AG04449 (cell line): ENCODE measurements at regions of chr22 and their contacts with region 1.

Region 1: DNA sequence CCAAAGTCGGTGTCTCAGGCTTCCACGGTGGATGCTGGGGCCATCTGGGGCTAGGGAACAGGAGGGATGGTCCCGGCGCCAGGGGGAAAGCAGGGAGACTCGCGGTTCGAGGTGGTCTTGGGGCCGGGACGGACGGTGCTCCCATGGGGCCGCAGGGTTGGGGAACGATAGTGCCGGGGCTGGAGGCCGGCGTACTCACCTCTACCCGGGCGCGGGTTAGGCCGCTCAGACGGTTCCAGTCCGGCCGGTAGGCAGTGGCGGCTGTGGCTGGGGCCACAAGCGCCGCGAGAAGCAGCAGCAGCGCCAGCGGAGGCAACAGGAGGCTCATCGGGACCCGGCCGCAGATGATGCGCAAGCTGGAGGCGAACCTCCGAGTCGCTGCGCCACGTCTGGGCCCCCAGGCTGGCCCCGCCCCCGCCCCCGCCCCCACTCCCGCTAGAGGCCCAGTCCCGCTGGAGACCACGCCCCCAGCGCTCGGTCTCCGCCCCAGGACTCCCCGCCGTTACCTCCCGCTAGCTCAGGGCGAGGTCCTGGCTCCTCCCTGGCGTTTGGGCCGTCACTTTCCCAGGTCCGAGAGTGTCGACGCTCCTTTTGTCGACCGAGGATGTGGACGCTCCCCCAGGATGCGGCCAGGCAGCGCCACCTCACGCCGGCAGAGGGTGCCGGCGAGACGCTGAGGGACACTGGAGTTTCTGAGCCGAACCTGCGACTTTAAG is at the start of gene SELENOM:
- DNase-seq: peak; percentile 88
- H3K4me3 ChIP-seq: peak within 1 kb of the TSS; percentile 97
- CTCF ChIP-seq: peak; percentile 97

Region 2: DNA sequence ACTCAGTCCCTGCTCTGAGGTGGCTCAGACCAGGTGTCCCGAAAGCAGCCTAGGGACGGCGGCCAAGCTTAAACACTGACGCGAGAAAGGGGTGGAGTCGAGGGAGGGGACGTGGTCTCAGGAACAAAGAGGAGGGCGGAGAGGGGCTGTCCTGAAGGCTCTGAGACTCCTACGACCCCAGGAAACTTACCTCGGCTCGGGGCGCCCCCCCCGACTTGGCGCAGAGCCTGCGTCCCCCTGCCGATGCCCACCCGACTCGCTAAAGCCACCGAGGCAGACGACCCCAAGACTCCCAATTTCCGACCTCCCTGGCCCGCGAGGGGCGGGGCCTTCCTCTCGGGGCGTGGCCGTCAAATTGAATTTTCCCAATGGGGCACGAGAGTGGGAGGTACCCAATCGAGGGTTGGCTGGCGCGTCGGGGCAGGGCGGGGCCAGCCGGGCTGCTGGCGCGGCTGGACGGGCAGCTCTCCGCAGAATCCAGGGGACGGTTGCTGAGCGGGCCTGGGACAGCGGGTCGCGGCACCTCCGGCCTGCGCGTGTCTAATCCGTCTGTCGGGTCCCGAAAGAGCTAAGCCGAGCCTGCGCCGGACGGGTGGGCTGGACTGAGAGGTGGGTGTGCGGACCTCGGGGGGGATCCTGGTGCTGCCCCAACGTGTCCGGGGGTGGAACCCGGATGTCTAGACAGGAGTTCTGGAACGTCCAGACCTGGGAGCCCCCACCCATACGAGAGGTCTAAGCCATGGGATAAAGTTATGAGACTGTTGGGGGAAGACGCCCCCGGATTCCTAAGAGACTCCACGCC is 26.3 kb before region 1 on chr22 and contains the start of gene SMTN:
- CTCF ChIA-PET with region 1: interaction called, 157 read pairs
- POLR2A ChIA-PET with region 1: interaction called, 14 read pairs
- DNase-seq: no peak
- H3K4me3 ChIP-seq: peak within 1 kb of the TSS; percentile 88
- CTCF ChIP-seq: no peak

Region 3: DNA sequence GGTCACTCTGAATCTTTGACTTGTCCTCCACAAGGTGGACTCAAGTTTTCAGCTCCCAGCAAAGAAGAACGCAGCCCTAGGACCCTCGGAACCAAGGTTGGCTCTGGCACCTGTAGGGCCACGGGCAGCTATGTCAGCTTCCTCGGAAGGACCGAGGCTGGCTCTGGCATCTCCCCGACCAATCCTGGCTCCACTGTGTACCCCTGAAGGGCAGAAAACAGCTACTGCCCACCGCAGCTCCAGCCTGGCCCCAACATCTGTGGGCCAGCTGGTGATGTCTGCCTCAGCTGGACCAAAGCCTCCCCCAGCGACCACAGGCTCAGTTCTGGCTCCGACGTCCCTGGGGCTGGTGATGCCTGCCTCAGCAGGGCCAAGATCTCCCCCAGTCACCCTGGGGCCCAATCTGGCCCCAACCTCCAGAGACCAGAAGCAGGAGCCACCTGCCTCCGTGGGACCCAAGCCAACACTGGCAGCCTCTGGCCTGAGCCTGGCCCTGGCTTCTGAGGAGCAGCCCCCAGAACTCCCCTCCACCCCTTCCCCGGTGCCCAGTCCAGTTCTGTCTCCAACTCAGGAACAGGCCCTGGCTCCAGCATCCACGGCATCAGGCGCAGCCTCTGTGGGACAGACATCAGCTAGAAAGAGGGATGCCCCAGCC is 17.6 kb after region 1 on chr22:
- CTCF ChIA-PET with region 1: interaction called, 29 read pairs
- POLR2A ChIA-PET with region 1: interaction called, 5 read pairs
- DNase-seq: no peak
- H3K4me3 ChIP-seq: no peak overlapping the region
- CTCF ChIP-seq: no peak

Region 4: DNA sequence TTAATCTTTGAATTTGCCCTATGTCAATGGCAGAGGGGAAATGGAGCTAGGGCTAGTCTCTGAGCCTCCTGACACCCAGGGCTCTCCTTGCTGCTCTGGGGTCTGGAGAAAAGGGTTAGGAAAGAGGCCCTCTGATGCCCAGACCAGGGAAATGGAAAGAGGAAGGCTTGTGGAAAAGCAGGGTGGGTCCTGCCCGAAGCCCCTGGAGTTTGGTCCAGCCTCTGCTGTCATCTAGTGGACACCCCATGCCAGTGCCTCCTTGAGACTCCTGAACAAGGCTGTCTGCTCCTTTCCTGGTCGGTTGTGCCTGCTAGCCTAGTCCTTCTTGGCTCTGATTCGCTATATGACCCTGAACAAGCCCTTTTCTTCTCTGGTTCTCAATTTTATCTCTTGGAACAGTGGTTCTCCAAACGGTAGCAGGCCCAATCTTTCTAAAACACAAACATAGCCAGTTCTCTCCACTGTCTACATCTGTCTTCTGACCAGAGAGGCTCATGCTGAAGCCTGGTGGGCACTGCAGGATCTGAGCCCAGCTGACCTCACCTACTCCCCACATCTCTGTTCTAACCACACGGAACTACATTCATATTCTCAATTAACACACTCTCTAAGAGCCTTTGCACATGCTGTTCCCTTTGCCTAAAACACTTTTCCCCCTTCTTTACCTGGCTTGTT is 41.8 kb after region 1 on chr22:
- CTCF ChIA-PET with region 1: interaction called, 160 read pairs
- POLR2A ChIA-PET with region 1: no interaction called
- DNase-seq: no peak
- H3K4me3 ChIP-seq: no peak overlapping the region
- CTCF ChIP-seq: peak; percentile 97

Region 5: GRCh38 chr22:31185056-31185455 is 77.7 kb after region 1 on chr22:
- CTCF ChIA-PET with region 1: no interaction called
- POLR2A ChIA-PET with region 1: no interaction called
- DNase-seq: no peak
- H3K4me3 ChIP-seq: no peak overlapping the region
- CTCF ChIP-seq: no peak

Region 6: DNA sequence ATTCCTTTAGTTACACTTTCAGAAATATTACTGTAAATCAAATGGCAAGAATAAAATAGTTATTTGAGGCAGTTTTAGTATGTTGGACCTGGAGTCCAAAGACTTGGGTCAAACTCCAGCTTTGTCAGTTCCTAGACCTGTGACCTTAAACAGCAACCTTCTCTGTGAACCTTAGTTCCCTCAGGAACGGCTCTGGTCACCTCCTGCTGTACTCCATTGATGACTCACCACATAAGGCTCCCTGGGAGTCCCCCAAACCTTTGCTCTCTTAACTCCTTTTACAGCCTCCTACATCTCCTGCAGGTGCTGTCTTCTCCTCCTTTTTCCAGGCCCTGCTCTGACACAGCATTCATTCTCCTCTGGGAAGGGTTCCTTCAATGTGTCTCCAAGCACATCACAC is 133.9 kb after region 1 on chr22:
- CTCF ChIA-PET with region 1: interaction called, 11 read pairs
- POLR2A ChIA-PET with region 1: no interaction called
- DNase-seq: no peak
- H3K4me3 ChIP-seq: no peak overlapping the region
- CTCF ChIP-seq: no peak

Region 7: GRCh38 chr22:31345331-31346254 is 238.3 kb after region 1 on chr22:
- CTCF ChIA-PET with region 1: no interaction called
- POLR2A ChIA-PET with region 1: no interaction called
- DNase-seq: no peak
- H3K4me3 ChIP-seq: peak overlapping the region; percentile 70
- CTCF ChIP-seq: peak; percentile 90